Esophagus muscularis mucosa (tissue), 4 donors: ENCODE measurements at regions of chr9 and their contacts with region 1.

Region 1: GRCh38 chr9:22008736-22009562 is at the start of gene CDKN2B:
- DNase-seq: peak; percentile 96
- H3K4me3 ChIP-seq: peak within 1 kb of the TSS; percentile 70 to 77 (median 73)
- H3K27ac ChIP-seq: peak within 1 kb of the TSS; percentile 84 to 94 (median 91)
- H3K4me1 ChIP-seq: peaks cover 12 to 33% (median 19%) of the 10 kb centered on the region in 4 donors
- H3K27me3 ChIP-seq: peaks cover 0 to 33% (median 2%) of the 10 kb centered on the region in 4 donors
- CTCF ChIP-seq: peak; percentile 78 to 91 (median 90)
- EP300 ChIP-seq: no peak
- POLR2A ChIP-seq: peak; percentile 38
- total RNA-seq, gene CDKN2B: 9.9 to 14.6 (median 12.2) TPM

Region 2: GRCh38 chr9:21995177-21996086 is 13.5 kb before region 1 on chr9:
- intact Hi-C with region 1: loop called (anchors 2 kb)
- DNase-seq: peak; percentile 96
- H3K4me3 ChIP-seq: peak overlapping the region; percentile 68 to 93 (median 76)
- H3K27ac ChIP-seq: peak overlapping the region; percentile 64 to 88 (median 82)
- H3K4me1 ChIP-seq: peaks cover 10 to 17% (median 15%) of the 10 kb centered on the region in 4 donors
- H3K27me3 ChIP-seq: peaks cover 0 to 32% (median 0%) of the 10 kb centered on the region in 4 donors
- CTCF ChIP-seq: peak; percentile 20 to 28 (median 25)
- EP300 ChIP-seq: no peak
- POLR2A ChIP-seq: no peak

Region 3: DNA sequence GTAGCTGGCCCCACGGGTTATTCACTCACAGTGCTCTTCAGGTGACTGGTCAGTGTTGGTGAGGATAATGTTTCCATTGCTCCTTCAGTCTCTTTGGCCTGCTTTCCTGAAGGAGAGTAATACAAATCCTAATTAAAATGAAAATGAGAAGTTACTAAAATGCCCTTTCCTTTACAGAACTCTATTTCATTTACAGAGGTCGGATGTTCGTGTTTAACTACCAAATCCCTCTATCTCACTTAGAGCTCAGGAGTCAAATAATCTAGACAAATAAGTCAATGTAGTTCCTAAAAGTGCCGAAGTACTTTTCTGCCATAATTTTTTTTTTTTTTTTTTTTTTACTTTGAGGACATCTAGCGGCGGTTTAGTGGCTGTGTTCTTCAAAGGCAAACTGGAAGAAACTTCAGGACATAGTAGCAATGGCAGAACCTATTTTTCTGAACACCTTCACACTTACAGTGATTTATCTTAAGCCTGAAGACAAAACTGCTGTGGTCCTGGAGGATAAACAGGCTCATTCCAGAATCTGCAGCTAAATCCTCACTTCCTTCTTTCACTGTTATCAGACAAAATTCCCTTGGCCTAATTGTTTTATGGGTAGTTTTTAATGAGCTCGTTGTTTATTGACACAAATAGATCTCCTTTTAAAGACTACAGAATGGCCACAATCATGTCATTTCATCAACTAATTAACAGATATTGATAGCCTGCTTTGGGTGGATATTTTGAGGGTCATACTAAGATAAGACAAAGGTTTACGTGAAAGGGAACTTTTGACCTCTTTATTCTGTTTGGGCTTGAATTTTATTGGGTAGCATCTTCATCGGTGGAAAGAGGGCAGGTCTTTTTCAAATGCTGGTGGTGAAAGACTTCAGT is 230.1 kb after region 1 on chr9:
- intact Hi-C with region 1: loop called (anchors 10 kb)
- DNase-seq: no peak
- H3K4me3 ChIP-seq: no peak overlapping the region
- H3K27ac ChIP-seq: no peak overlapping the region
- H3K4me1 ChIP-seq: peaks cover 0 to 8% (median 0%) of the 10 kb centered on the region in 4 donors
- H3K27me3 ChIP-seq: no peaks in the 10 kb centered on the region
- CTCF ChIP-seq: peak; percentile 23 to 51 (median 36)
- EP300 ChIP-seq: no peak
- POLR2A ChIP-seq: no peak